ENCODE measurements at regions of chr17 and their contacts with region 1.

Region 1: GRCh38 chr17:82351716-82352488 is 7.1 kb upstream of the TEX19 start:
- DNase-seq: peak; percentile 88
- CTCF ChIP-seq: peak; percentile 85

Region 2: DNA sequence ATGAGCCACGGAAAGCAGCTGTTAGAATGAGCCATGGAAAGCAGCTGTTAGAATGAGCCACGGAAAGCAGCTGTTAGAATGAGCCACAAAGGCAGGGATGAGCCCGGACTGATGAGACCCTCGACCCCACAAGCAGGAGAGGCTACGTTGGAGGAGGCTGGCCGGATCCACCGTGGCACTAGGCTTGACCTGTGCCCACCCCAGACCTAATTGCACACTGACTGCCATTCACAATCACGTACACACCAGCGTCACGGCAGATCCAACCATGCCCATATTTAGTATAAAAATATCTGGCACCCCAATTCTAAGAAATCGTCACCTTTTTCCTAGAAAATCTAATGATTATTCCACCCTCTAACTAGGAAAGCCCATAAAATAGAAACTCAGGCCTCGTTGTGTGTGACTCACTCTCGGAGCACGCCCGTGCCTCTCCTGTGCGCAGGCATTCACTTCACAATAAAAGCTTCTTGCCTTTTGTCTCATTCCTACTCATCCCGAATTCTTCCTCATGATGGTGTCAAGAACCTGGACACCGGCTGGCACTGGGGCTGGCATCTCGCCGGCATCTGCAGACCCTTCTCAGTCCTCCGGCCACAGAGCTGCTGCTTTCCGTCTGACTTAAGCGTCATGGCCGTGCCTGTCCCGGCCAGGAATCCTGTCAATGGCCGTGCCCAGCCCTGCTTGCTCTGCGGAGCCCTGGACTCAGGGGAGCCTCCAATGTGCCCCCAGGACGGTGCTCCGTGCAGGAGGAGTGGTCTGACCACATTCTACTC is 12.9 kb before region 1 on chr17:
- CTCF ChIA-PET with region 1: interaction called, 16 read pairs
- POLR2A ChIA-PET with region 1: no interaction called
- DNase-seq: no peak
- CTCF ChIP-seq: no peak

Region 3: GRCh38 chr17:82361885-82362633 is 10.2 kb after region 1 on chr17:
- CTCF ChIA-PET with region 1: interaction called, 14 read pairs
- POLR2A ChIA-PET with region 1: no interaction called
- DNase-seq: no peak
- CTCF ChIP-seq: no peak

Region 4: DNA sequence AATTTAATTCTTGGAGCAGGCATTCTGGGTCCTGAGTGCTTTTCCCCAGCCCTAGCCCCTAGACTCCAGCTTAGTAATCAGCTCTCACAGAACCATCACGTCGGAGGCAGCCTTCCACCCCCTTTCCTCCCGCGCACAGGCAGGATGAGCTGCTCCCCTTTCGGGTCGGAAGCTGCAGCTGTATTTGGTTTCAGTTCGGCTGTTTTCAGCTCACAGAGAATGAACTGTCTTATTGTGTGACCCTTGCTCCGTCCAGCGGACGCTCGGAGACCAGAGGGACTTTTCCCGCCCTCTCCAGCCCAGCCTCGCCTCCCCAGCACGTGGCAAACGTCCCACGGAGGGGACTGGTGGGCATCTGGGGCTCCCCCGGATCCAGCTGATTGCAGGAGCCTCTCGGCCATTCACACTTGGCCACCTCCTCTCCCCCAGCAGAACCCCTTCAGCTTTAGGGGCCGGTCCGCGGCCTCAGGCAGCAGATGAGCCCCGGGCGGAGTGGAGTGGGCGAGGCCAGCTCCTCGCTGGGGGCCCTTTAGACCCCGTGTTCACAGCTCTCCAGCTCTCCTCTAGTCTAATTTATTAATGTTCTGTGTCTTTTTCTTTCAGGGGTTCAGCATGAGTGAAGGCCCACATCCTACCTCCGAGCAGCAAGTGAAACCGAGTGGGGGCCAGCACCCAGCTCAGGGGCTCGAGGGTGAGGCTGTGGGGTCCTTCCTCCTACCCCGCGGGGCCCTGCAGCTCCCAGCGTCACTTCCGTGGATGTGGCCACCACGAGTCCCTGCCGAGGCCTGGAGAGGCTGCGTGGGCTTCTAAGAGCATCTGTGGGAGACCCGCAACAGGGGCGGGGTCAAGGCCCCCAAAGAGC is 18.8 kb after region 1 on chr17:
- CTCF ChIA-PET with region 1: interaction called, 35 read pairs
- POLR2A ChIA-PET with region 1: no interaction called
- DNase-seq: peak; percentile 68
- CTCF ChIP-seq: peak; percentile 14

Region 5: GRCh38 chr17:82408288-82408937 is 56.5 kb after region 1 on chr17:
- CTCF ChIA-PET with region 1: interaction called, 19 read pairs
- POLR2A ChIA-PET with region 1: no interaction called
- DNase-seq: no peak
- CTCF ChIP-seq: no peak

Region 6: GRCh38 chr17:82418001-82418986 is 66.4 kb after region 1 on chr17 and contains the starts of genes HEXD and OGFOD3:
- CTCF ChIA-PET with region 1: interaction called, 19 read pairs
- POLR2A ChIA-PET with region 1: no interaction called
- DNase-seq: peak; percentile 97
- CTCF ChIP-seq: no peak

Region 7: GRCh38 chr17:82441691-82442487 is 90.0 kb after region 1 on chr17:
- CTCF ChIA-PET with region 1: no interaction called
- POLR2A ChIA-PET with region 1: no interaction called
- DNase-seq: no peak
- CTCF ChIP-seq: no peak

Region 8: DNA sequence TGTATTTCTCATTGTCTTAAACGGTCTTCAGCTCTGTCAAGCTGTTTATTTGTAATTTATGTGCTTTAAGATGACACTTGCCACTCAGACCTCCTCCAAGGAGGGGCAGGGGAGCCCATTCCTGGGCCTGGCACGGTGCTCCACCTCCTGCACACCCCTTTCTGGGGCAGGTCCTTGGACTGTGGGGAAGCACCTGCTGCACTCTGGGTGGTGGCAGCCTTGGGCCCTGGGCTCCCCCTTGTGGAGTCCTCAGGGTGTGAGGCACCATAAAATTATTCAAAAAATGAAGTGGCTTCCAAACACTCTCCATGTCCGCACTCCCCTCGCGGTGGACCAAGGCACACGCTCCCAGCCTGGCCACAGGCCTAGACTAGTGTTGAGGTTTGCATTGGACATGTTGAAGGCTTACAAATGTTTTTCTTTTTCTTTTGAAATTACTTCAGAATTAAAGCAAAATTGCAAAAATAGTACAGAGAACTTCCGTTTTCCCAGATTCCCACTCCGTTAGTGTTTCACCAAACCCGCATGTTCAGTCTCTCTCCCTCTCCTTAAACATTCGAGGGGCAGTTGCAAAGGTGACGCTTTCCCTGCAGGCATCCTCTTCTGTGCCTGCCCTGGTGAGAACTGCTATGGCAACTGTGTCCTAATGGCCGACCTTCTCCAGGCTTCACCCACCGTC is 200.0 kb after region 1 on chr17:
- CTCF ChIA-PET with region 1: interaction called, 13 read pairs
- POLR2A ChIA-PET with region 1: no interaction called
- DNase-seq: peak; percentile 91
- CTCF ChIP-seq: peak; percentile 78

Measured in GM10248 (cell line).